CD8-positive, alpha-beta memory T cell (primary cell): ENCODE measurements at regions of chr16 and their contacts with region 1.

Region 1: GRCh38 chr16:30874821-30875717 is 18.8 kb downstream of the BCL7C start:
- DNase-seq: peak; percentile 76 to 89 (median 85)
- H3K4me3 ChIP-seq: peak overlapping the region; percentile 81
- H3K4me3 Mint-ChIP-seq: peak overlapping the region; percentile 86 to 98 (median 90)
- H3K27ac ChIP-seq: peak overlapping the region; percentile 84
- H3K27ac Mint-ChIP-seq: peak overlapping the region; percentile 90 to 98 (median 97)
- H3K4me1 ChIP-seq: peaks cover 31% of the 10 kb centered on the region
- H3K4me1 Mint-ChIP-seq: peaks cover 31 to 51% (median 44%) of the 10 kb centered on the region in 3 donors
- H3K27me3 ChIP-seq: no peaks in the 10 kb centered on the region
- H3K27me3 Mint-ChIP-seq: no peaks in the 10 kb centered on the region

Region 2: GRCh38 chr16:30571695-30572600 is 303.1 kb before region 1 on chr16 and contains the start of gene ZNF688:
- CTCF ChIA-PET with region 1: no interaction called
- POLR2A ChIA-PET with region 1: no interaction called
- DNase-seq: peak; percentile 92 to 98 (median 96)
- H3K4me3 ChIP-seq: peak within 1 kb of the TSS; percentile 78
- H3K4me3 Mint-ChIP-seq: peak within 1 kb of the TSS; percentile 87 to 96 (median 91)
- H3K27ac ChIP-seq: peak within 1 kb of the TSS; percentile 92
- H3K27ac Mint-ChIP-seq: peak within 1 kb of the TSS; percentile 89 to 99 (median 96)
- H3K4me1 ChIP-seq: peaks cover 44% of the 10 kb centered on the region
- H3K4me1 Mint-ChIP-seq: peaks cover 20 to 47% (median 31%) of the 10 kb centered on the region in 3 donors
- H3K27me3 ChIP-seq: no peaks in the 10 kb centered on the region
- H3K27me3 Mint-ChIP-seq: no peaks in the 10 kb centered on the region
- total RNA-seq, gene ZNF688: 9.6 to 10.8 TPM

Region 3: DNA sequence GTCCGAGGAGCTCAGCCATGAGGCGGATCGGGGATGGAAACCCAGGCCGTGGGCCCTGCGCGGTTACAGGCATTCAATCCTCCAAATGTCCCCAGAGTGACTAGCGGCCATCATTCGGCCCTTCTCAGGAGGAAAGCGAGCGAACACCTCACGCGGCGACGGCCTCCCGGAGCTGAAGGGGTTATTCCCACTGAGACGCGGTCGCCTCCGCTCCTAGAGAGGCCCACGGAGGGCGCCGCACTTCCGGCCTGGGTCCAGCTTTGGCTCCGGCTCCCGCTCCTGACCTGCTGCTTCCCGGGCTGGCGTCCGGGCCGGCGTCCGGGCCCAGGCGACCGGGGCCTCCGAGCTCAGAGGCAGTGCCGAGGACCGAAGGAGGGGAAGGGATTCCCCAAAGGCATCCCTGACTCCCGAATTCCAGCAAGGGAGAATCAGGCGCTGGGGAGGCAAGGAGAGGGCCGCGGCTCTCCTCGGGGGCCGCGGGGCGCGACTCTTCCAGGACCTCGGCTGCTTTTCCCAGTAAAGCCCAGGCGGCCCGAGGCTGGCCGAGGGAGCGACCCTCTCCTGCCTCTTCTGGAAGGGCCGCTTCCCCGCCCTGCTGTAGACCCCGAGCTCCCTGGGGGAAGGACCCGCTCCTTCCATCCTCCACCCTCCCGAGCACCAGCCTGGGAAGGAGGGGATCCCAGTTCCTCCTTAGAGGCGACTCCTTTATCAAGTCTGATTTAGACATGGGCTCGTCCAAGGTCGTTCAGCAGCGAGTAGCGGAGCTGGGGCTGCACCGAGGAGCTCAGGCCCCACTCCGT is 69.5 kb before region 1 on chr16:
- CTCF ChIA-PET with region 1: interaction called, 4 read pairs
- POLR2A ChIA-PET with region 1: interaction called, 11 read pairs
- DNase-seq: peak; percentile 17 to 66 (median 43)
- H3K4me3 ChIP-seq: peak overlapping the region; percentile 52
- H3K4me3 Mint-ChIP-seq: peak overlapping the region; percentile 54 to 94 (median 85)
- H3K27ac ChIP-seq: peak overlapping the region; percentile 70
- H3K27ac Mint-ChIP-seq: peak overlapping the region in 7 of 8 donors; percentile 33 to 92 (median 67)
- H3K4me1 ChIP-seq: peaks cover 12% of the 10 kb centered on the region
- H3K4me1 Mint-ChIP-seq: peaks cover 8 to 20% (median 18%) of the 10 kb centered on the region in 3 donors
- H3K27me3 ChIP-seq: no peaks in the 10 kb centered on the region
- H3K27me3 Mint-ChIP-seq: peaks cover 0 to 4% of the 10 kb centered on the region in 2 donors

Region 4: DNA sequence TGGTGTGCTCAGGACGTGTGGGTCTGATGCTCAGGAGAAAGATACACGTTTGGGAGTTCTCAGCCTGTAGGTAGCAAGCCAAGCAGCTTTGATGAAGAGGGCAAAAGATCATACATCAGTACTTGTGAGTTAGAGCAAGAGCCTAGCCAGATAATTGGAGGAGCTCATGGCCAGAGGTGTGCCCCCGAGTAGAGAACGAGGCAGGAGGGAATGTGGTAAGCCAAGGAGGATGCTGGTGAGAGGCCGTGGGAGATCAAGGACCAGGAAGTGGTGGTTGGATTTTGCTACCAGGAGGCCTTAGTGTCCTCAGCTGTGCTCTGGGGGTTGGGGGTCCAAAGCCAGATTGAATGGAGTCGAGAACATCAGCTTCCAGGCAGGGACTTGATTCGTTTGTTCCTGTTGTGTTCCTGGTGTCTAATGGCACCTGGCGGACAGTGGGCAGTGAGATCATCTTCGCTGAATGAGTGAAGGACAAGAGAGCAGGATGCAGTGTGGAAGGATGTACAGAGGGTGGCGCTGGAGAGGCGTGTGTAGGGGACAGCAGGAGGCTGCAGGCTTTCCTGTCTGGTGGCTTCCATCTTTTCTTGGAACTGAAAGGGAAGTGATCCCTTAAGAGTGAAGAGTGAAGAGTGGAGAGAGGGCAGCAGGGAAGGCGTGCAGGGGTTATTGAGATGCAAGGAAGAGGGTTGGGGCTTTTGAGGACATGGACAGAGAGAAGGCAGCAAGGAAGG is 59.9 kb after region 1 on chr16:
- CTCF ChIA-PET with region 1: no interaction called
- POLR2A ChIA-PET with region 1: no interaction called
- DNase-seq: peak in 1 of 5 donors; percentile 23
- H3K4me3 ChIP-seq: no peak overlapping the region
- H3K4me3 Mint-ChIP-seq: no peak overlapping the region
- H3K27ac ChIP-seq: no peak overlapping the region
- H3K27ac Mint-ChIP-seq: peak overlapping the region in 5 of 8 donors; percentile 15 to 79 (median 24)
- H3K4me1 ChIP-seq: peaks cover 5% of the 10 kb centered on the region
- H3K4me1 Mint-ChIP-seq: peaks cover 12 to 23% (median 12%) of the 10 kb centered on the region in 3 donors
- H3K27me3 ChIP-seq: no peaks in the 10 kb centered on the region
- H3K27me3 Mint-ChIP-seq: no peaks in the 10 kb centered on the region

Region 5: GRCh38 chr16:31050280-31051030 is 175.4 kb after region 1 on chr16:
- CTCF ChIA-PET with region 1: no interaction called
- POLR2A ChIA-PET with region 1: interaction called, 10 read pairs
- DNase-seq: no peak
- H3K4me3 ChIP-seq: no peak overlapping the region
- H3K4me3 Mint-ChIP-seq: no peak overlapping the region
- H3K27ac ChIP-seq: no peak overlapping the region
- H3K27ac Mint-ChIP-seq: no peak overlapping the region
- H3K4me1 ChIP-seq: no peaks in the 10 kb centered on the region
- H3K4me1 Mint-ChIP-seq: peaks cover 0 to 4% (median 3%) of the 10 kb centered on the region in 3 donors
- H3K27me3 ChIP-seq: no peaks in the 10 kb centered on the region
- H3K27me3 Mint-ChIP-seq: peaks cover 0 to 3% of the 10 kb centered on the region in 2 donors